Naive thymus-derived CD4-positive, alpha-beta T cell (primary cell): ENCODE measurements at regions of chr15 and their contacts with region 1.

Region 1: GRCh38 chr15:65318870-65319356 is 14.4 kb downstream of the RNU5B-1 start:
- DNase-seq: peak; percentile 57 to 76 (median 71)
- ATAC-seq: peak; percentile 97
- H3K4me3 ChIP-seq: no peak overlapping the region
- H3K4me3 Mint-ChIP-seq: no peak overlapping the region
- H3K27ac ChIP-seq: no peak overlapping the region
- H3K27ac Mint-ChIP-seq: peak overlapping the region in 1 of 9 donors; percentile 2
- H3K4me1 ChIP-seq: no peaks in the 10 kb centered on the region
- H3K4me1 Mint-ChIP-seq: peaks cover 0 to 3% (median 0%) of the 10 kb centered on the region in 7 donors
- H3K27me3 ChIP-seq: no peaks in the 10 kb centered on the region
- H3K27me3 Mint-ChIP-seq: peaks cover 0 to 31% (median 7%) of the 10 kb centered on the region in 5 donors

Region 2: GRCh38 chr15:65400760-65401610 is 82.1 kb after region 1 on chr15:
- CTCF ChIA-PET with region 1: interaction called, 3 read pairs
- POLR2A ChIA-PET with region 1: no interaction called
- intact Hi-C with region 1: loop called (anchors 1 to 5 kb)
- DNase-seq: peak in 4 of 9 donors; percentile 18 to 59 (median 30)
- ATAC-seq: peak; percentile 72
- H3K4me3 ChIP-seq: no peak overlapping the region
- H3K4me3 Mint-ChIP-seq: no peak overlapping the region
- H3K27ac ChIP-seq: no peak overlapping the region
- H3K27ac Mint-ChIP-seq: no peak overlapping the region
- H3K4me1 ChIP-seq: no peaks in the 10 kb centered on the region
- H3K4me1 Mint-ChIP-seq: peaks cover 4 to 11% (median 6%) of the 10 kb centered on the region in 7 donors
- H3K27me3 ChIP-seq: no peaks in the 10 kb centered on the region
- H3K27me3 Mint-ChIP-seq: peaks cover 41 to 67% (median 59%) of the 10 kb centered on the region in 5 donors

Region 3: GRCh38 chr15:65476903-65477302 is 158.0 kb after region 1 on chr15:
- CTCF ChIA-PET with region 1: no interaction called
- POLR2A ChIA-PET with region 1: no interaction called
- intact Hi-C with region 1: no loop called
- DNase-seq: no peak
- ATAC-seq: no peak
- H3K4me3 ChIP-seq: no peak overlapping the region
- H3K4me3 Mint-ChIP-seq: no peak overlapping the region
- H3K27ac ChIP-seq: no peak overlapping the region
- H3K27ac Mint-ChIP-seq: peak overlapping the region in 2 of 9 donors; percentile 67 to 77
- H3K4me1 ChIP-seq: no peaks in the 10 kb centered on the region
- H3K4me1 Mint-ChIP-seq: peaks cover 0 to 4% (median 3%) of the 10 kb centered on the region in 7 donors
- H3K27me3 ChIP-seq: no peaks in the 10 kb centered on the region
- H3K27me3 Mint-ChIP-seq: no peaks in the 10 kb centered on the region